CD4-positive, alpha-beta T cell (primary cell): ENCODE measurements at regions of chr10 and their contacts with region 1.

Region 1: GRCh38 chr10:5441106-5441505 is 28.7 kb downstream of the NET1 start:
- DNase-seq: no peak
- ATAC-seq: no peak
- H3K4me3 ChIP-seq: no peak overlapping the region
- H3K4me3 Mint-ChIP-seq: no peak overlapping the region
- H3K27ac ChIP-seq: no peak overlapping the region
- H3K27ac Mint-ChIP-seq: no peak overlapping the region
- H3K4me1 ChIP-seq: peaks cover under 1% of the 10 kb centered on the region
- H3K4me1 Mint-ChIP-seq: peaks cover 20% of the 10 kb centered on the region
- H3K27me3 ChIP-seq: no peaks in the 10 kb centered on the region
- H3K27me3 Mint-ChIP-seq: no peaks in the 10 kb centered on the region
- CTCF ChIP-seq: no peak

Region 2: GRCh38 chr10:5354068-5354467 is 87.0 kb before region 1 on chr10:
- CTCF ChIA-PET with region 1: no interaction called
- POLR2A ChIA-PET with region 1: no interaction called
- intact Hi-C with region 1: no loop called
- DNase-seq: no peak
- ATAC-seq: no peak
- H3K4me3 ChIP-seq: no peak overlapping the region
- H3K4me3 Mint-ChIP-seq: no peak overlapping the region
- H3K27ac ChIP-seq: no peak overlapping the region
- H3K27ac Mint-ChIP-seq: no peak overlapping the region
- H3K4me1 ChIP-seq: no peaks in the 10 kb centered on the region
- H3K4me1 Mint-ChIP-seq: no peaks in the 10 kb centered on the region
- H3K27me3 ChIP-seq: no peaks in the 10 kb centered on the region
- H3K27me3 Mint-ChIP-seq: peaks cover 18% of the 10 kb centered on the region
- CTCF ChIP-seq: no peak

Region 3: GRCh38 chr10:5396556-5397300 is 44.4 kb before region 1 on chr10:
- CTCF ChIA-PET with region 1: no interaction called
- POLR2A ChIA-PET with region 1: no interaction called
- intact Hi-C with region 1: no loop called
- DNase-seq: no peak
- ATAC-seq: no peak
- H3K4me3 ChIP-seq: no peak overlapping the region
- H3K4me3 Mint-ChIP-seq: no peak overlapping the region
- H3K27ac ChIP-seq: no peak overlapping the region
- H3K27ac Mint-ChIP-seq: no peak overlapping the region
- H3K4me1 ChIP-seq: no peaks in the 10 kb centered on the region
- H3K4me1 Mint-ChIP-seq: no peaks in the 10 kb centered on the region
- H3K27me3 ChIP-seq: peaks cover 0 to 8% of the 10 kb centered on the region in 2 experiments
- H3K27me3 Mint-ChIP-seq: peaks cover 18% of the 10 kb centered on the region
- CTCF ChIP-seq: no peak

Region 4: GRCh38 chr10:5623081-5623748 is 182.1 kb after region 1 on chr10:
- CTCF ChIA-PET with region 1: interaction called, 116 read pairs
- POLR2A ChIA-PET with region 1: interaction called, 27 read pairs
- intact Hi-C with region 1: loop called (anchors 1 kb)
- DNase-seq: peak; percentile 66 to 89 (median 78)
- ATAC-seq: peak; percentile 100
- H3K4me3 ChIP-seq: no peak overlapping the region
- H3K4me3 Mint-ChIP-seq: no peak overlapping the region
- H3K27ac ChIP-seq: no peak overlapping the region
- H3K27ac Mint-ChIP-seq: no peak overlapping the region
- H3K4me1 ChIP-seq: peaks cover 6% of the 10 kb centered on the region
- H3K4me1 Mint-ChIP-seq: no peaks in the 10 kb centered on the region
- H3K27me3 ChIP-seq: no peaks in the 10 kb centered on the region
- H3K27me3 Mint-ChIP-seq: no peaks in the 10 kb centered on the region
- CTCF ChIP-seq: peak; percentile 89